Left ventricle myocardium inferior (tissue), 1 donor: ENCODE measurements at regions of chr2 and their contacts with region 1.

Region 1: DNA sequence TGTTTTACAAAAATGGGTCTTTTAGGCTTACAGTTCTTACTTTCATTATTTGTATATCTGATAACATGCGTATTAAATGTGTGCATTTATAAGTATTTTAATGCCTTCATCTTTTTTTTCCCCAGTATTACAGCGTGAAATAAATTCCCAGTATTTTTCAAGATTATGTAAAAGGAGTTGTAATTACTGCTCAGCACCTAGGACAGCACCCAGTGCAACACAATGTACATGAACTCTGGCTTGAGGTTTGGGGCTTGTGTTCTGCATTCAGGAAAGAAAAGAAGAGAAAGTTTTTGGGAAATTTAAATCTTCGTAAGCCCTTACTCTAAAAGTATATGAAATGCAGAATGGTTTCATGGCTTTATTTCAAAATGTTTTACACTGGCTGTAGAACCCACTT is 16.7 kb downstream of the ZNF638 start:
- DNase-seq: no peak
- H3K4me3 ChIP-seq: no peak overlapping the region
- H3K27ac ChIP-seq: no peak overlapping the region
- H3K4me1 ChIP-seq: peaks cover 49% of the 10 kb centered on the region
- H3K27me3 ChIP-seq: no peaks in the 10 kb centered on the region
- CTCF ChIP-seq: no peak

Region 2: DNA sequence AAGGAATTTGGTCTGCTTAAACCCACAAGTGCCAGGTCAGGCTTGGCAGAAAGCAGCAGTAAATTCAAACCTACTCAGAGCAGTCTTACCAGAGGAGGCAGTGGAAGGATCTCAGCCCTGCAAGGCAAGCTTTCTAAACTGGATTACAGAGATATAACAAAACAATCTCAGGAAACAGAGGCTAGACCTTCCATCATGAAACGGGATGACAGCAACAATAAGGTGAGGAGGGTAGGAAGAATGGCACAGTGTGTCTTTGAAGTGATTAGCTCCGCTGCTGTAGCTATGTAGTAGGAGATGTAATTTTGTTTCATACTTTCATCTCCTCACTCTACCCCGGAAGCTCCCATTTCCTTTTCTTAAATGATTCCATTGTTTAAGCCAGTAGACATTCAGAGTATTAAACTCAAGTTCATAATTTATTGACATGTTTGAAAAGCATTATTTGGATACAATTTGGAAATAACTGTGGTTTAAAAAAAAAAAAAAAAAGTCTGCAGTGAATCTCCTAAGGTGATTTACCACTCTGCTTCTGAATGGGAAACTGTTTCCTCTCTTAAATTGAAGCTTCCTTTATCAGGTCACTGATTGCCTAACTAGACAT is 75.6 kb after region 1 on chr2:
- intact Hi-C with region 1: loop called (anchors 5 kb)
- DNase-seq: no peak
- H3K4me3 ChIP-seq: no peak overlapping the region
- H3K27ac ChIP-seq: peak overlapping the region; percentile 8
- H3K4me1 ChIP-seq: peaks cover 32% of the 10 kb centered on the region
- H3K27me3 ChIP-seq: no peaks in the 10 kb centered on the region
- CTCF ChIP-seq: no peak

Region 3: GRCh38 chr2:71510196-71510807 is 162.0 kb after region 1 on chr2:
- intact Hi-C with region 1: no loop called
- DNase-seq: peak; percentile 64
- H3K4me3 ChIP-seq: no peak overlapping the region
- H3K27ac ChIP-seq: no peak overlapping the region
- H3K4me1 ChIP-seq: peaks cover 32% of the 10 kb centered on the region
- H3K27me3 ChIP-seq: no peaks in the 10 kb centered on the region
- CTCF ChIP-seq: peak; percentile 96

Region 4: GRCh38 chr2:71950256-71951082 is 602.2 kb after region 1 on chr2:
- intact Hi-C with region 1: no loop called
- DNase-seq: peak; percentile 80
- H3K4me3 ChIP-seq: no peak overlapping the region
- H3K27ac ChIP-seq: peak overlapping the region; percentile 63
- H3K4me1 ChIP-seq: peaks cover 35% of the 10 kb centered on the region
- H3K27me3 ChIP-seq: no peaks in the 10 kb centered on the region
- CTCF ChIP-seq: no peak